ENCODE measurements at regions of chr17 and their contacts with region 1.

Region 1: GRCh38 chr17:47295062-47295845 is 28.5 kb upstream of the EFCAB13 start:
- DNase-seq: no peak
- ATAC-seq: no peak
- H3K4me3 Mint-ChIP-seq: no peak overlapping the region
- H3K27ac Mint-ChIP-seq: peak overlapping the region; percentile 74
- H3K4me1 Mint-ChIP-seq: peaks cover 25% of the 10 kb centered on the region
- H3K27me3 Mint-ChIP-seq: no peaks in the 10 kb centered on the region
- CTCF ChIP-seq: no peak

Region 2: GRCh38 chr17:47188876-47189731 is 106.2 kb before region 1 on chr17 and contains the start of gene CDC27:
- CTCF ChIA-PET with region 1: no interaction called
- POLR2A ChIA-PET with region 1: no interaction called
- intact Hi-C with region 1: no loop called
- DNase-seq: peak; percentile 99
- ATAC-seq: peak; percentile 92
- H3K4me3 Mint-ChIP-seq: peak within 1 kb of the TSS; percentile 94
- H3K27ac Mint-ChIP-seq: peak within 1 kb of the TSS; percentile 92
- H3K4me1 Mint-ChIP-seq: peaks cover 57% of the 10 kb centered on the region
- H3K27me3 Mint-ChIP-seq: no peaks in the 10 kb centered on the region
- CTCF ChIP-seq: no peak
- total RNA-seq, gene CDC27: 72.5 and 76.5 TPM in 2 replicates

Region 3: GRCh38 chr17:47279062-47279736 is 16.1 kb before region 1 on chr17:
- CTCF ChIA-PET with region 1: interaction called, 3 read pairs
- POLR2A ChIA-PET with region 1: interaction called, 3 read pairs
- intact Hi-C with region 1: loop called (anchors 2 kb)
- DNase-seq: peak; percentile 43
- ATAC-seq: peak; percentile 94
- H3K4me3 Mint-ChIP-seq: peak overlapping the region; percentile 78
- H3K27ac Mint-ChIP-seq: peak overlapping the region; percentile 80
- H3K4me1 Mint-ChIP-seq: peaks cover 72% of the 10 kb centered on the region
- H3K27me3 Mint-ChIP-seq: no peaks in the 10 kb centered on the region
- CTCF ChIP-seq: no peak